T-cell (primary cell): ENCODE measurements at regions of chr17 and their contacts with region 1.

Region 1: DNA sequence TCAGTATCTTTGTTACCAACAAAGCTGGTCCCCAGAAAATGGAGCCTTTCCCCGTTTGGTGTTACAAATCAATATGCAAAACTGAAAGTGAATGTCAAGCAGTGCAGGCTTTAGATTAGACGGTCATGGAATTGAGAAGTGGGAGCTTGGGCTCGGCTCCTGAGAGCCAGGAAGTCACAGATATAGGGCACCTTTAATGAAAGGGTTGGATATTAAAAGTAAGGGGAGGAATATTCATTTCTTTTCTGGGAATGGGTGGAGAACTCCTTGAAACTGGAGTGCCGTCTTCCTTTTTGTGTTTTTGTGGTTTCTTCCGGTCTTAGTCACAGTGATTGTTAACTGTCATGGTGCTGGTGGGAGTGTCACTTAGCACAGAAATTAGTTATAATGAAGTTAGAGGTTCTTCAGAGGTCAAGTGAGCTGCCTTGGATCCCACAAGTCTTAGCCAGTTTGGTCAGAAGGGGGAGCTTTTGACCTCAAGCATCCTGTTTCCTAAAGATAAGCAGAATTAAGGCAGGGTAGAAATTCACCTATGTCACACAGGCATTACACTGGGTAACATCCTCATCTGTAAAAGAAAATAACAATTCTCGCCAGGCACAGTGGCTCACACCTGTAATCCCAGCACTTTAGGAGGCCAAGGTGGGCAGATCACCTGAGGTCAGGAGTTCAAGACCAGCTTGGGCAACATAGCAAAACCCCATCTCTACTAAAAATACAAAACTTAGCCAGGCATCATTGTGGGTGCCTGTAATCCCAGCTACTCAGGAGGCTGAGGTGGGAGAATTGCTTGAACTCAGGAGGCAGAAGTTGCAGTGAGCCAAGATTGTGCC is 9.6 kb upstream of the EIF1 start:
- DNase-seq: peak in 31 of 35 experiments; percentile 10 to 84 (median 48)
- ATAC-seq: peak; percentile 88 to 97 (median 92)
- H3K4me3 ChIP-seq: peak overlapping the region; percentile 38 to 47
- H3K4me3 Mint-ChIP-seq: peak overlapping the region; percentile 79 to 88 (median 83)
- H3K27ac ChIP-seq: peak overlapping the region; percentile 89
- H3K27ac Mint-ChIP-seq: peak overlapping the region; percentile 95 to 99
- H3K4me1 ChIP-seq: peaks cover 16 to 35% of the 10 kb centered on the region in 2 experiments
- H3K4me1 Mint-ChIP-seq: peaks cover 28 to 45% (median 34%) of the 10 kb centered on the region in 3 donors
- H3K27me3 ChIP-seq: no peaks in the 10 kb centered on the region
- H3K27me3 Mint-ChIP-seq: no peaks in the 10 kb centered on the region

Region 2: GRCh38 chr17:41695954-41696756 is 17.0 kb after region 1 on chr17:
- CTCF ChIA-PET with region 1: interaction called in 1 of 2 experiments, 60 read pairs
- POLR2A ChIA-PET with region 1: interaction called, 27 to 108 read pairs
- DNase-seq: peak; percentile 39 to 95 (median 69)
- ATAC-seq: peak; percentile 21 to 66 (median 52)
- H3K4me3 ChIP-seq: no peak overlapping the region
- H3K4me3 Mint-ChIP-seq: peak overlapping the region in 1 of 3 donors; percentile 39
- H3K27ac ChIP-seq: no peak overlapping the region
- H3K27ac Mint-ChIP-seq: peak overlapping the region; percentile 23 to 76
- H3K4me1 ChIP-seq: peaks cover 0 to 12% of the 10 kb centered on the region in 2 experiments
- H3K4me1 Mint-ChIP-seq: peaks cover 30 to 32% (median 30%) of the 10 kb centered on the region in 3 donors
- H3K27me3 ChIP-seq: no peaks in the 10 kb centered on the region
- H3K27me3 Mint-ChIP-seq: no peaks in the 10 kb centered on the region

Region 3: GRCh38 chr17:41777574-41778188 is 98.6 kb after region 1 on chr17:
- CTCF ChIA-PET with region 1: no interaction called
- POLR2A ChIA-PET with region 1: no interaction called
- DNase-seq: no peak
- ATAC-seq: no peak
- H3K4me3 ChIP-seq: no peak overlapping the region
- H3K4me3 Mint-ChIP-seq: no peak overlapping the region
- H3K27ac ChIP-seq: no peak overlapping the region
- H3K27ac Mint-ChIP-seq: no peak overlapping the region
- H3K4me1 ChIP-seq: no peaks in the 10 kb centered on the region
- H3K4me1 Mint-ChIP-seq: peaks cover 0 to 3% (median 0%) of the 10 kb centered on the region in 3 donors
- H3K27me3 ChIP-seq: peaks cover 0 to 57% of the 10 kb centered on the region in 2 experiments
- H3K27me3 Mint-ChIP-seq: peaks cover 0 to 26% of the 10 kb centered on the region in 2 donors